Heart right ventricle (tissue), 16 donors: ENCODE measurements at regions of chr3 and their contacts with region 1.

Region 1: DNA sequence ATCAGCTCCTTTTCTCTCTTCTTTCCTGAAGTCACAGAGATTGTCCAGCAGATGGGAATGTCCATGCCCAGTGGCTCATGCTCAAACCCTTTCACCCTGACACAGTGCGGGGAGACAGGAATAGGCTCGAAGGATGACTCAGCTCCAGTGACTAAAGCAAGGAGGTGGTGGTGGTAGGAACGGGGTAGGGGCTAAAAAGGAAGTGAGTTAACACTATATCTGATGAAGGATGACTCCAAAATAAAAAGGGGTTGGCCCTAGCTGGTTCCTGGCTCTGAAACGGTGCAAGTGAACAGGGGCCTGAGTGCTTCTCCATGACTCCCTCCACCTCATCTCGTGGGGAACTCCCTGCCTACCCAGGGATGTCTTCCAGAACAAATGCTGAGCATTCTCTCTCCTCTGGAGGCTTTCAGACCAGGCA is 167.4 kb upstream of the LPP start:
- DNase-seq: no peak
- ATAC-seq: peak in 4 of 8 donors; percentile 23 to 35 (median 30)
- H3K4me3 ChIP-seq: no peak overlapping the region
- H3K27ac ChIP-seq: peak overlapping the region in 5 of 10 donors; percentile 28 to 73 (median 50)
- H3K4me1 ChIP-seq: peaks cover 0 to 33% (median 14%) of the 10 kb centered on the region in 9 donors
- H3K27me3 ChIP-seq: peaks cover 0 to 5% (median 0%) of the 10 kb centered on the region in 7 donors
- CTCF ChIP-seq: no peak

Region 2: GRCh38 chr3:188006726-188007393 is 20.3 kb after region 1 on chr3:
- intact Hi-C with region 1: loop called in 1 of 10 experiments (anchors 1 kb)
- DNase-seq: peak; percentile 35 to 40
- ATAC-seq: peak; percentile 75 to 93 (median 88)
- H3K4me3 ChIP-seq: no peak overlapping the region
- H3K27ac ChIP-seq: peak overlapping the region in 7 of 10 donors; percentile 2 to 71 (median 42)
- H3K4me1 ChIP-seq: peaks cover 0 to 26% (median 0%) of the 10 kb centered on the region in 9 donors
- H3K27me3 ChIP-seq: no peaks in the 10 kb centered on the region
- CTCF ChIP-seq: no peak